Calu3 (cell line): ENCODE measurements at regions of chr3 and their contacts with region 1.

Region 1: DNA sequence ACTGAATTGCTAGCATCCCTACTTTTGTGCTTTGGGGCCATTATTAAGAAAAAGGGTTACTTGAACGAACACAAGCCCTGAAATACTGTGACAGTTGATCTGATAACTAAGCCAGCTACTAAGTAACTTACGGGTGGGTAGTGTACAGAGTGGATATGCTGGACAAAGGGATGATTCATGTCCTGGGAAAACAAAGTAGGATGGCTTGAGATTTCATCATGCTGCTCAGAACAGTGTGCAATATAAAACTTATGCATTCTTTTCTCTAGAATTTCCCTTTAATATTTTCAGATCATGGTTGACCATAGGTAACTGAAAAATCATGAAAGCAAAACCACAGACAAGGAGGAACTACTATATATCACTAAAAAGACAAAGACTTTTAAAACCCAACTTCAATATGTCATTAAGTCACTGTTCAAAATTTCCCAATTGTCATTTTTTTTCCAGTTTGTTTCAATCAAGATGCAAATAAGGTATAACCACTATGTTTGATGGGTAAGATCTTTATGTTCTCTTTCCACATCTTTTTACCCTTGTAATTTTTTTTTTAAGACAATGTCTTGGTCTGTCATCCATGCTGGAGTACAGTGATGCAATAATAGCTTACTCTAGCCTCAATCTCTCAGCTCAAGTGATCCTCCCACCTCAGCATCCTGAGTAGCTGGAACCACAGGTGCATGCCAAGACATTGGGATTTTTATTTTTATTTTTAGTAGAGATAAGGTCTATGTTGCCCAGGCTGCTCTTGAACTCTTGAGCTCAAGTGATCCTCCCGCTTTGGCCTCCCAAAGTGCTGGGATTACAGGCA is 67.7 kb downstream of the IFT80 start:
- DNase-seq: peak; percentile 16
- H3K4me3 Mint-ChIP-seq: peak overlapping the region; percentile 34
- H3K27ac Mint-ChIP-seq: peak overlapping the region; percentile 83
- H3K4me1 Mint-ChIP-seq: peaks cover 52% of the 10 kb centered on the region
- H3K27me3 Mint-ChIP-seq: no peaks in the 10 kb centered on the region
- CTCF ChIP-seq: no peak

Region 2: GRCh38 chr3:159839561-159840379 is 491.6 kb before region 1 on chr3:
- CTCF ChIA-PET with region 1: no interaction called
- intact Hi-C with region 1: loop called (anchors 10 kb)
- DNase-seq: no peak
- H3K4me3 Mint-ChIP-seq: no peak within 1 kb of the TSS
- H3K27ac Mint-ChIP-seq: no peak within 1 kb of the TSS
- H3K4me1 Mint-ChIP-seq: no peaks in the 10 kb centered on the region
- H3K27me3 Mint-ChIP-seq: no peaks in the 10 kb centered on the region
- CTCF ChIP-seq: no peak

Region 3: GRCh38 chr3:160319322-160319721 is 12.0 kb before region 1 on chr3:
- CTCF ChIA-PET with region 1: no interaction called
- intact Hi-C with region 1: loop called (anchors 2 kb)
- DNase-seq: no peak
- H3K4me3 Mint-ChIP-seq: no peak overlapping the region
- H3K27ac Mint-ChIP-seq: no peak overlapping the region
- H3K4me1 Mint-ChIP-seq: peaks cover 9% of the 10 kb centered on the region
- H3K27me3 Mint-ChIP-seq: no peaks in the 10 kb centered on the region
- CTCF ChIP-seq: no peak

Region 4: DNA sequence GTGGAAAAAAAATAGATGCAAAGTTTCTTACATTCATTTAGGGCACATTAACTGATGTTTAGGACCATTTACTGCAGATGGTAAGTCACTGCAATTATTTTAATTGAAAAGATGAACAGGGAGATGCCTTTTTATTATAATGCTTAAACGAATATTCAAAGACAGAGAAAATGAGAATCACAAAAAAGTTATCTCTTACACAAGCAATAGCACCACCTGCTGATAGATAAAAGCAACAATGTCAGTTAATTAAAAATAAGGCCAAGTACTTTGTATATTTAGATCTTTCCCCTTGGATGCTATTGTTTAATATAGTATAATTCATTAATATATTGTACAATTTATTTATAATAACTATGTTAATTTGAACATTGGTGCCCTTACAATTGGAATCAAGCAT is 11.8 kb after region 1 on chr3:
- CTCF ChIA-PET with region 1: no interaction called
- intact Hi-C with region 1: no loop called
- DNase-seq: no peak
- H3K4me3 Mint-ChIP-seq: no peak overlapping the region
- H3K27ac Mint-ChIP-seq: no peak overlapping the region
- H3K4me1 Mint-ChIP-seq: no peaks in the 10 kb centered on the region
- H3K27me3 Mint-ChIP-seq: no peaks in the 10 kb centered on the region
- CTCF ChIP-seq: peak; percentile 46